Activated CD4-positive, alpha-beta memory T cell treated with anti-CD3 and anti-CD28 coated beads, Interleukin-2, amount 10 ng/mL, durations not matched to agents 7 days and 5 days (primary cell): ENCODE measurements at regions of chr1 and their contacts with region 1.

Region 1: DNA sequence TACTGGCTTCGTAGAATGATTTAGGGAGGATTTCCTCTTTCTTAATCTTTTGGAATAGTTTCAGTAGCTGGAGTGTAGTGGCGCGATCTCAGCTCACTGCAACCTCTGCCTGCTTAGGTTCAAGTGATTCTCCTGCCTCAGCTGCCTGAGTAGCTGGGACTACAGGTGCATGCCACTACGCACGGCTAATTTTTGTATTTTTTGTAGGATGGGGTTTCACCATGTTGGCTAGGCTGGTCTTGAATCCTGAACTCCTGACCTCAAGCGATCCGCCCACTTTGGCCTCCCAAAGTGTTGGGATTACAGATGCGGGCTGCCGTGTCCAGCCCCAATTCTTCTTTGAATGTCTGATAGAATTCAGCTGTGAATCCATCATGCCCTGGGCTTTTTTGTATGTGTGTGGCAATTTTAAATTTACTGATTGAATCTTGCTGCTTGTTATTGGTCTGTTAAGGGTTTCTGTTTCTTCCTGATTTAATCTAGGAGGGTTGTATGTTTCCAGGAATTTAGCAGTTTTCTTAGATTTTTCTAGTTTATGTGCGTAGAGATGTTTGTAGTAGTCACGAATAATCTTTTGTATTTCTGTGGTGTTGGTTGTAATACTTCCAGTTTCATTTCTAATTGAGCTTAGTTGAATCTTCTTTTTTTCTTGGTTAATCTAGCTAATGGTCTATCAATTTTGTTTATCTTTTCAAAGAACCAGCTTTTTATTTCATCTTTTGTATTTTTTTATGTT is 15.3 kb downstream of the MAN1C1 start:
- DNase-seq: no peak
- H3K4me3 Mint-ChIP-seq: peak overlapping the region; percentile 71
- H3K27ac Mint-ChIP-seq: peak overlapping the region; percentile 84
- H3K4me1 Mint-ChIP-seq: peaks cover 72% of the 10 kb centered on the region
- H3K27me3 Mint-ChIP-seq: peaks cover 7% of the 10 kb centered on the region

Region 2: DNA sequence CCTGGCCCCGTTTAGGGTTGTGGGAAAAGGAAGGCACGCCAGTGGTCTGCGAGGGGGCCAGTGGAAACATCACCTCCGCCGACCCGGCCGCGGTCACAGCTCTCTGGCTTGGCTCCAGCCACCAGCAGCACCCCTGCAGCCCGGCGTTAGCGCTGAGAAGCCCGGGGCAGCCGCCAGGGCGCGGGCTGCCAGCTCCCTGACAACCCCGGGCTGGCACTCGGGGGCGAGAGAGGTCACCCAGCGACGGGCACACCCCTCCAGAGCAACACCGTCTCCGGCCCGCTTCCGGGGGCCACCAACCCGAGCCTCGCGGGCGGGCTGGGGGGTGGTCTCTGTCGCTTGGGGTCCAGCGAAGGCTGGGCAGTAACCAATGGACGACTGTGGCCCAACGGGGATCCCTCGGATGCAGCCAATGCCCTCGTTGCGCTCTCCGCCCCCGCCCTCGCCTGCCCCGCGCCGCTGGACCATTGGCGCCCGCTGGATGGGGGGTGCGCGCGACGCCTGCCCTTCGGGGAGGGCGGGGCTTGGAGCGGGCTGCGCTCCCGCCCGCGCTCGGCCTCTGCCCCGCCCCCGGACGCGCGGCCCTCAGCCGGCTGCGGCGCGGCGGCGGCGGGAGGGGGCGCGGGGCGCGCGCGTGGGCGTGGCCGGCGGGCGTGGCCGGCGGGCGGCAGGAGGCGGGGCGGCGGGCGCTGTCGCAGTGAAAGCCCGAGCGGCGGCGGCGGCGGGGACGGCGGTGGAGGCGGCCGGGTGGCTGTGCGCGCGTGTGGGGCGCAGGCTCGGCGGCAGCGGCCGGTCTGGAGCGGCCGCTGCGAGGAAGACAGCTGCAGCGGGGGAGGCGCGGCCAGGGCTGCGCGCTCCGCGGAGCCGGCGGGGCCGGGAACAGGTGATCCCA is 15.6 kb before region 1 on chr1 and contains the start of gene MAN1C1:
- CTCF ChIA-PET with region 1: interaction called, 19 read pairs
- POLR2A ChIA-PET with region 1: interaction called, 14 read pairs
- DNase-seq: peak; percentile 82
- H3K4me3 Mint-ChIP-seq: peak within 1 kb of the TSS; percentile 65
- H3K27ac Mint-ChIP-seq: no peak within 1 kb of the TSS
- H3K4me1 Mint-ChIP-seq: peaks cover 52% of the 10 kb centered on the region
- H3K27me3 Mint-ChIP-seq: peaks cover 51% of the 10 kb centered on the region
- total RNA-seq, gene MAN1C1: 22.3 to 24.1 TPM

Region 3: DNA sequence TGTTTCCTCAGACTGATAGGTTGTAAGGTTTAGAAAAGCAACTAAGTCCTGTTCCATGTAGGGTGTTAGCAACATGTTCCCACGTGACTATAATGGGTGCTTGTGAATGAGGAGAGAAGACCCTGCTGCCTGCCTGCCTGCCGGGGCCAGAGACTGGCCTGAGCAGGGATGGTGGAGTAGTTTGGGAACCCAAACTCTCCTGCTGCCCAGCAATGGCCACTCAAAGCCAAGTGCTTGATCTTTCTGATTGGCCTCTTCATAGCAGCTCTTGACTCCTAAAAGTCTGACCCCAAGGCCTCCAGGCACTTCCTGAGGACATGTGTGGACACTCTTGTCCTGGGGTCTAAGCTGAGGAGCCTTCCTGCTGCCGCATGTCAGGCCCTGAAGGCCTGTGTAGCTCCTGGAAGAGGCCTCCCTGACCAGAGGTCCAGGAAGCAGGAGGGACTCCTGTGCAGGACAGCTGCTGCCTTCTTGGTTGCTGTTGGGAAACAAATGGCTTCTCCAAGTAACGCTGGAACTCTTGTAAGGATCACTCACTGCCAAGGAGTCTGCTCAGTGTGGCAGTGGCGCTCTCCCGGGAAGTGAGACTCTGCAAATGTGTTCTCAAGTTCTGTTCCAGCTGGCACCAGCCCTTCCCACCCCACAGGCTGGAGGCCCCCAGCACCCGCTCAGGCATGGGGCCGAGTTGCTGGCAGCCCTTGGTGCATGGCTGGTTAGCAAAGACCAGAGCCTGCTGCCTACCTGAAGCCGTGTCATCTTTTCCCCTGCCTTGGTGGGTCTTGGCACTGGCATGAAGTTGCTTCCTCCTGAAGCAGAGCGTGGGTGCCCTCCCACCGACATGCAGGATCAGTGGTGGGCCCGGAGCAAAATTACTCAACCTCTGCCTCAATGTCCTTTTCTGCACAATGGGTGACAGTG is 20.2 kb after region 1 on chr1:
- CTCF ChIA-PET with region 1: no interaction called
- POLR2A ChIA-PET with region 1: no interaction called
- DNase-seq: no peak
- H3K4me3 Mint-ChIP-seq: no peak overlapping the region
- H3K27ac Mint-ChIP-seq: no peak overlapping the region
- H3K4me1 Mint-ChIP-seq: peaks cover 8% of the 10 kb centered on the region
- H3K27me3 Mint-ChIP-seq: peaks cover 33% of the 10 kb centered on the region